Activated CD8-positive, alpha-beta T cell treated with anti-CD3 and anti-CD28 coated beads for 36 hours (primary cell): ENCODE measurements at regions of chr2 and their contacts with region 1.

Region 1: GRCh38 chr2:217650716-217651360 is 352.0 kb downstream of the TNS1 start:
- DNase-seq: peak; percentile 42
- ATAC-seq: peak; percentile 92
- H3K4me3 Mint-ChIP-seq: no peak overlapping the region
- H3K27ac Mint-ChIP-seq: no peak overlapping the region
- H3K4me1 Mint-ChIP-seq: peaks cover 9% of the 10 kb centered on the region
- H3K27me3 Mint-ChIP-seq: no peaks in the 10 kb centered on the region
- CTCF ChIP-seq: peak; percentile 75

Region 2: DNA sequence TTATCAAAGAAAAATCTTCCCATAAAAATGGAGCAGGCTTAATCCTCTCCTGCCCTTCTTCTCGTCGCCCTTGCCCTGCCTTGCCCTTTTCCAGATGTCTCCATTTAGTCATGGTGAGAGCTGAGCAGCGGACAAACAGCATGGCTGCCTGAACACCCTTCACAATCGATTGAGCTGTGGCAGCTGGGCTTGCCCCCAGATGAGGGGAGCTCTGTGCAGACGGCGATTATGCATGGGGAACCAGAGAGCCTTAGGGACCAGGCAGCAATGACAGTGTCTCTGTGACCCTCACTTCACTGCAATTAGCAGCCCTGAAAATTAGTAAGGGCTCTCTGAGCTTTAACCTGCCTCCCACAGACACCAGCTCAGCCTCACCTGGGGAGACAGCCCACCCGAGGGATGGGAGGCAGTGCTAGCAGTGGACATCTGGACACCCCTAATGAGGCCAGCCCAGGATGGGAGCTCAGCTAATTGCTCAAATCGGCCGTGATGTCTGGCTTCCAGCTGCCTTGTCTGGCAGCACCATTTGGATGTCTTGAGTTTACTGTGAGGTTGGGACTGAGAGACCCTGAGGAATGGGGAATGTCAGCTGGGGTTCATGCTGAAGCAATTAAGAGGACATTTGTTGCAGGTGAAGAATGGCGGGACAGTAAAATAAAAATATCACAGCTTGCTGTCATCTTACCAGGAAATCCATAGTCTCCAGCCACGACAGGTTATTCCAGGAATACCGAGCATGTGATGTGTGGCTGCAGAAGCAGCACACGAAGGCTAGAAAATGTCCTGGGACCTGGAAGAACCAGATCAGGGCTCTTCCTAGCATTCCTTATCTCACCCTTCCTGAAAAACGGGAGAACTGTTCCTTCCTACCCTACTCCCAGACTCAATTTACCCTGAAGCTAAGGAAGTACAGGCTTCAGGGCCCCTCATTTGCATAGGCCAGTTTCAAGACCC is 13.6 kb before region 1 on chr2:
- CTCF ChIA-PET with region 1: interaction called, 41 read pairs
- POLR2A ChIA-PET with region 1: no interaction called
- intact Hi-C with region 1: no loop called
- DNase-seq: no peak
- ATAC-seq: no peak
- H3K4me3 Mint-ChIP-seq: no peak overlapping the region
- H3K27ac Mint-ChIP-seq: no peak overlapping the region
- H3K4me1 Mint-ChIP-seq: no peaks in the 10 kb centered on the region
- H3K27me3 Mint-ChIP-seq: peaks cover 1% of the 10 kb centered on the region
- CTCF ChIP-seq: no peak

Region 3: GRCh38 chr2:217666338-217666737 is 15.5 kb after region 1 on chr2:
- CTCF ChIA-PET with region 1: interaction called, 12 read pairs
- POLR2A ChIA-PET with region 1: no interaction called
- intact Hi-C with region 1: no loop called
- DNase-seq: peak; percentile 38
- ATAC-seq: peak; percentile 87
- H3K4me3 Mint-ChIP-seq: no peak overlapping the region
- H3K27ac Mint-ChIP-seq: peak overlapping the region; percentile 7
- H3K4me1 Mint-ChIP-seq: peaks cover 40% of the 10 kb centered on the region
- H3K27me3 Mint-ChIP-seq: no peaks in the 10 kb centered on the region
- CTCF ChIP-seq: no peak

Region 4: GRCh38 chr2:217695033-217695520 is 44.2 kb after region 1 on chr2:
- CTCF ChIA-PET with region 1: interaction called, 11 read pairs
- POLR2A ChIA-PET with region 1: no interaction called
- intact Hi-C with region 1: no loop called
- DNase-seq: no peak
- ATAC-seq: peak; percentile 30
- H3K4me3 Mint-ChIP-seq: no peak overlapping the region
- H3K27ac Mint-ChIP-seq: no peak overlapping the region
- H3K4me1 Mint-ChIP-seq: peaks cover 12% of the 10 kb centered on the region
- H3K27me3 Mint-ChIP-seq: no peaks in the 10 kb centered on the region
- CTCF ChIP-seq: no peak

Region 5: DNA sequence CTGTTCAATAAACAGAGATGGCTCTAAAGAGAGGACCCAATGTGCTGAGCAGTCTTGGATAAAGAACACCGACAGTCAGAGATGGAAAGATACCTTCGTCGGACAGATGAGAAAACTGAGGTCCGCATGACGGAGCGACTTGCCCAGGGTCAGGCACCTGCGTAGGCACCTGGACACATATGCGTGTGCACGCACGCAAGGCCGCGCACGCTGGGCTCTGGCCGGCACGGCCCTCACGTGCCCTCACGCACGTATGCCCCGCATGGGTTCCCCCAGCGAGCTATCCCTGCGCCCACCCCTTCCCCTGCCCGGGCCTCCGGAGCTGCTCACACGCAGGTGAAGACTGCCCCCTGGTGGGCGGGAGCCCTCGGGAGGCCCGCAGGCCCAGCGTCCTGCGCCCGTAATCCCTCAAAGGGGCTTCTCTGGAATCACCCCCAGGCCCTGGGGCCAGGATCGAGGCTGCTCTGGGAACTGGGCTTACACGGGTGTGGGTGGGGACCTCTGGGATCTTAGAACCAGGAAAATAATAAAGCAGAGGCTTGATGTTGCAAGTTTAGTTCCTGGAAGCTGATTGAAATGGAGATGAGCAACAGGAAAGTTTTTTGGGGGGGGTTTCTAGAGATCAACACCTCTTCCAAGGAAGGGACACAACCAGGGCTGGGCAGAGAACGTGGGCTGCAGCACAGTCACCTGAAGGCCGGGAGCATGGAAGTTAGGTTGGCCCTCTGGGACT is 105.7 kb after region 1 on chr2:
- CTCF ChIA-PET with region 1: interaction called, 3 read pairs
- POLR2A ChIA-PET with region 1: interaction called, 3 read pairs
- intact Hi-C with region 1: loop called (anchors 10 kb)
- DNase-seq: peak; percentile 90
- ATAC-seq: peak; percentile 86
- H3K4me3 Mint-ChIP-seq: peak overlapping the region; percentile 74
- H3K27ac Mint-ChIP-seq: peak overlapping the region; percentile 91
- H3K4me1 Mint-ChIP-seq: peaks cover 38% of the 10 kb centered on the region
- H3K27me3 Mint-ChIP-seq: peaks cover 1% of the 10 kb centered on the region
- CTCF ChIP-seq: peak; percentile 92